ENCODE measurements at regions of chrX and their contacts with region 1.

Region 1: GRCh38 chrX:38923451-38923969 is 122.3 kb downstream of the MID1IP1 start:
- DNase-seq: peak; percentile 79
- ATAC-seq: peak; percentile 86
- H3K4me3 ChIP-seq: no peak overlapping the region
- H3K27ac ChIP-seq: no peak overlapping the region
- H3K4me1 ChIP-seq: no peaks in the 10 kb centered on the region; the same call in 1 of the 2 replicates
- H3K27me3 ChIP-seq: no peaks in the 10 kb centered on the region
- CTCF ChIP-seq: no peak
- EP300 ChIP-seq: 0 out of 4 replicates have a peak, but pooled peaks have one; percentile 19 to 34
- POLR2A ChIP-seq: no peak
- RAD21 ChIP-seq: no peak

Region 2: GRCh38 chrX:38803586-38804431 is 119.7 kb before region 1 on chrX:
- CTCF ChIA-PET with region 1: interaction called, 3 read pairs
- POLR2A ChIA-PET with region 1: no interaction called
- RAD21 ChIA-PET with region 1: interaction called, 4 read pairs
- SMC1A ChIA-PET with region 1: interaction called, 12 read pairs
- in situ Hi-C with region 1: no loop called
- intact Hi-C with region 1: loop called (anchors 2 kb)
- DNase-seq: no peak
- ATAC-seq: peak; percentile 78
- H3K4me3 ChIP-seq: peak overlapping the region; percentile 70
- H3K27ac ChIP-seq: peak overlapping the region; percentile 82
- H3K4me1 ChIP-seq: no peaks in the 10 kb centered on the region
- H3K27me3 ChIP-seq: no peaks in the 10 kb centered on the region
- CTCF ChIP-seq: no peak
- EP300 ChIP-seq: no peak
- POLR2A ChIP-seq: peak; percentile 84; the same call in 1 of the 2 replicates
- RAD21 ChIP-seq: no peak

Region 3: DNA sequence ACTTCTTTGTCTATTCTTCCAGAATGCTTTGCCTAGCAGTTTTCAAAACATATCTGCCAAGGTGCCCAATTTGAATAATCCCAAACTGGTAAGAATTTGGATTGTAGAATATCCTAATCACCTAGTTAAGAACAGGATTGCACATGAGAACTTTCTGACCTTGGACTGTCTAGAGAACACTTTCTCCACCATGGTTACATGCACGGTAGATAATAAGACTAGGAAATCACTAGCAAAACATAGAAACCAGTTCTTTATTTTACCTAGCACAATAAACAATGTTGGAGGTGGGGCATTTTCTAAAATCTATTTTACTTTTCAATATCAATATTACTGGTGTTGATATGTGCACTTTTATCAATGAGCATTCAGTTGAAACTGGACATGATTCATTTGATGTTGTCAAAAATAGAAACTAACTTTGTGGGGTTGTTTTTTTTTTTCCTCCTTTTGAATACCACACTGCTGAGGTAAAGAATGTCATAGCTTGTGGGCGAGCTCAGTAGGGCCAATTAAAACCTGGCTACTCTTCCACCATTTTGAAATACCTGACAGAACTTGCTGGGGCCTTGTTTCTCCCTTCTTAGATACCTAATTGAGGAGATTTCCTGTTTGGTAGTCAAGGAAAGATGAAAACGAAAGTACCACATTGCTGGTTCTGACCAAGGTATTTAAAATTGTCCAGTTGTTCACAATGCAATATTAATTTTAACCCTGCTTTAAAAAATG is 111.8 kb before region 1 on chrX:
- CTCF ChIA-PET with region 1: interaction called, 3 read pairs
- POLR2A ChIA-PET with region 1: interaction called, 3 read pairs
- RAD21 ChIA-PET with region 1: interaction called, 4 read pairs
- SMC1A ChIA-PET with region 1: interaction called, 12 read pairs
- in situ Hi-C with region 1: no loop called
- intact Hi-C with region 1: no loop called
- DNase-seq: no peak
- ATAC-seq: peak; percentile 71
- H3K4me3 ChIP-seq: no peak overlapping the region
- H3K27ac ChIP-seq: no peak overlapping the region; the same call in 1 of the 2 replicates
- H3K4me1 ChIP-seq: no peaks in the 10 kb centered on the region
- H3K27me3 ChIP-seq: no peaks in the 10 kb centered on the region
- CTCF ChIP-seq: no peak
- EP300 ChIP-seq: no peak
- POLR2A ChIP-seq: no peak
- RAD21 ChIP-seq: no peak

Region 4: GRCh38 chrX:38898261-38898660 is 25.2 kb before region 1 on chrX:
- CTCF ChIA-PET with region 1: no interaction called
- POLR2A ChIA-PET with region 1: no interaction called
- RAD21 ChIA-PET with region 1: interaction called, 5 read pairs
- SMC1A ChIA-PET with region 1: interaction called, 10 read pairs
- in situ Hi-C with region 1: no loop called
- intact Hi-C with region 1: no loop called
- DNase-seq: no peak
- ATAC-seq: peak; percentile 24; the same call in 2 of the 3 replicates
- H3K4me3 ChIP-seq: no peak overlapping the region
- H3K27ac ChIP-seq: peak overlapping the region; percentile 54
- H3K4me1 ChIP-seq: peaks cover 16% of the 10 kb centered on the region
- H3K27me3 ChIP-seq: no peaks in the 10 kb centered on the region
- CTCF ChIP-seq: no peak
- EP300 ChIP-seq: no peak
- POLR2A ChIP-seq: no peak
- RAD21 ChIP-seq: no peak

Region 5: DNA sequence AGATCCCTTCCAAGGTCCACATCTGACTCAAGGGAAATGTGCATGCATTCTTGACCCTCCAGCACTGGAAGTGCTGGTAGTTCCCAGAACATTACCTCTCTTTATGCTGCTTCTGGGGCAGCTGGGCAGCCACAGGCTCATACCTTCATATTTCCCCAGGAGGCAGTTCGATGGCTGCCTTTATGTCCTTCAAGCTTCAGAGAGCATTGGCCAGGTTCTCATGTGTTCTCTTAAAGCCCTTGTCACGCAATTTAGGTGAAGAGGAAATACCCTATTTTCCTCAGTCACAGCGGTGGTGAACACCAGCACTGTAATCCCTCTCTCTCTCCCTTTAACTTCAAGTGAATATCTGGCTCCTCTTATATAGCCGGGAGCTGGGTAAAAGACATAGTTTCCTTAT is 12.1 kb after region 1 on chrX:
- CTCF ChIA-PET with region 1: interaction called, 3 read pairs
- POLR2A ChIA-PET with region 1: no interaction called
- RAD21 ChIA-PET with region 1: no interaction called
- SMC1A ChIA-PET with region 1: interaction called, 10 read pairs
- in situ Hi-C with region 1: no loop called
- intact Hi-C with region 1: no loop called
- DNase-seq: no peak
- ATAC-seq: peak; percentile 25; the same call in 2 of the 3 replicates
- H3K4me3 ChIP-seq: no peak overlapping the region
- H3K27ac ChIP-seq: peak overlapping the region; percentile 16; the same call in 1 of the 2 replicates
- H3K4me1 ChIP-seq: no peaks in the 10 kb centered on the region
- H3K27me3 ChIP-seq: no peaks in the 10 kb centered on the region
- CTCF ChIP-seq: no peak
- EP300 ChIP-seq: no peak
- POLR2A ChIP-seq: no peak
- RAD21 ChIP-seq: no peak

Region 6: DNA sequence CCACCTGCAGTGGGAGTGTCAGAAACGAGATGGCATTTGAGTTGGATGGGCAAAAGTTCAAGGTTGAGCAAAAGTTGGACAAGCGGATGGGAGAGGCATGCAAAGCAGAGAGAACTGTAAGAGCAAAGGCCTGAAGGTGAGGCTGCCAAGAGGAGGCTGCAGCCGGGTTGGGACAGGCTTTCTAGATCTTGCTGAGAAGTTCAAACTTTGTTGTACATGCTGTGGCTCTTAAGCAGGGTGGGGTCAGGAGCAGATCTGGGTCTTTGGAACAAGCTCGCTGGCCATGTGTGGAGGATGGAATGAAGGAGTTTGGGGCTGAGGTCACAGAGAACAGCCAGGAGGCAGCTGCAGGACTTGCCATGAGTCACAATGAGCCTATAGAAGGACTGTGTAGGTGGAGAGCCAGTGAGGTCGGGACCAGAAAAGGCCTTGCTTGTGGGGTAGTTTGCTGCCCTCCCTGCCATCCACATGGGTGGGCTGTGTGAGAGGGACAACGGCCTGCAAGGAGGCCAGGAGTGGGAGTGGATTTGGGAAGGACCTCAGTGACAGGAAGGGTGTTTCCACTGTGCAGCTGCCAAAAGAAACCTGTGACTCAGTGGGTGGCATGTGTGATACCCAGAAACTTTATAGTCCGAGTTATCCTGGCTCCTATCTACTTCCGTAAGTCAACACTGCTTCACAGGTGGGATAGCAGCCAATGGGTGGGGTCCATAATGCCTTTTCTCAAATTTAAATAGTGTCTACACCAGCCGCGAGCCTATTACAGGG is 88.1 kb after region 1 on chrX:
- CTCF ChIA-PET with region 1: no interaction called
- POLR2A ChIA-PET with region 1: no interaction called
- RAD21 ChIA-PET with region 1: no interaction called
- SMC1A ChIA-PET with region 1: no interaction called
- in situ Hi-C with region 1: no loop called
- intact Hi-C with region 1: no loop called
- DNase-seq: no peak
- ATAC-seq: no peak
- H3K4me3 ChIP-seq: no peak overlapping the region
- H3K27ac ChIP-seq: no peak overlapping the region
- H3K4me1 ChIP-seq: no peaks in the 10 kb centered on the region
- H3K27me3 ChIP-seq: peaks cover 0 to 1% of the 10 kb centered on the region in 2 experiments; a peak in 2 of 4 replicates
- CTCF ChIP-seq: no peak
- EP300 ChIP-seq: no peak
- POLR2A ChIP-seq: no peak
- RAD21 ChIP-seq: no peak

Measured in GM12878 (cell line).